ENCODE measurements at regions of chr4 and their contacts with region 1.

Region 1: GRCh38 chr4:123978637-123979036 is 582.0 kb downstream of the SPRY1 start:
- DNase-seq: no peak
- H3K4me3 ChIP-seq: no peak overlapping the region
- CTCF ChIP-seq: no peak
- POLR2A ChIP-seq: no peak

Region 2: DNA sequence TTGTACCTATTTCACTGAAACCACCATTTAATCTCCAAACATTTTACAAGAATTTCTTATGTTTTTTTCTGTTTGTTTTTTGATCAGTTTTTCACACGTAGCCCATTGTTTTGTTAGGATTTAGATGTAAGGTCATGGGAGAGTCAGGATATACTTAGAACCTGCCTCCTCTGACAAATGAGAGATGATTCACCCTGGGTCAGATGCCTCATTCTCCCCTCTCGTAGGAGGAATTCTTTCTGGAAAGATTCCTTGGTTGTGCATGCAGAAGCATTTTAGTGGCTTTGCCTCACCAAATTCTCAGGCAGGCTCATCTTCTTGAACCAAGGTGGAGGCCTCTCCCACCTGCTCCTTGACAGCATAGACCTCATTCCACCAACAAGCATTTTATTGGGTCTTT is 17.3 kb after region 1 on chr4:
- intact Hi-C with region 1: loop called (anchors 1 kb)
- DNase-seq: no peak
- H3K4me3 ChIP-seq: no peak overlapping the region
- CTCF ChIP-seq: no peak
- POLR2A ChIP-seq: no peak

Measured in lower leg skin (tissue), 4 donors.